ENCODE measurements at regions of chr5 and their contacts with region 1.

Region 1: DNA sequence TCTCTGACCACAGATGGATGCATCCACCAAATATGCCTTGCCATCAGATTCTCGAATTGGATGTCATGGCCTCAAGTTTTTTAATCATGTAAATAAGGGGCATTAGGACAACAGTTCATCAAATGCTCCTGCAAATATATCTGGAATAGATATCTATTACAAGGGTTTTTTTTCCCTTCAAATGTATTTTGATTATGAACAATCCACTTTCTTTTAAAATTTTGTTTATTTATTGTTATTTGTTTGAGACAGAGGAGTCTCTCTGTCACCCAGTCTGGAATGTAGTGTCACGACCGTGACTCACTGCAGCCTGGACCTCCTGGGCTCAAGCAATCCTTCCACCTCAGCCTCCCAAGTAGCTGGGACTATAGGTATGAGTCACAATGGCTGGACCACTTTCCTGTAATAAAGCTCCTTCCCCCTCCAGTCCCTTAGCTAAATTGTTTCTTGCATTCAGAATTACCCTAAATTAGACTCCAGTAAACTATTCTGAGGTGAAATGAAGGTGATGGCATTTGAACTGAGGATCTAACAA is 1412.1 kb downstream of the EFNA5 start:
- DNase-seq: peak in 1 of 2 experiments; percentile 5
- H3K4me3 ChIP-seq: no peak overlapping the region
- H3K27ac ChIP-seq: no peak overlapping the region
- H3K4me1 ChIP-seq: no peaks in the 10 kb centered on the region
- H3K27me3 ChIP-seq: no peaks in the 10 kb centered on the region
- CTCF ChIP-seq: no peak

Region 2: DNA sequence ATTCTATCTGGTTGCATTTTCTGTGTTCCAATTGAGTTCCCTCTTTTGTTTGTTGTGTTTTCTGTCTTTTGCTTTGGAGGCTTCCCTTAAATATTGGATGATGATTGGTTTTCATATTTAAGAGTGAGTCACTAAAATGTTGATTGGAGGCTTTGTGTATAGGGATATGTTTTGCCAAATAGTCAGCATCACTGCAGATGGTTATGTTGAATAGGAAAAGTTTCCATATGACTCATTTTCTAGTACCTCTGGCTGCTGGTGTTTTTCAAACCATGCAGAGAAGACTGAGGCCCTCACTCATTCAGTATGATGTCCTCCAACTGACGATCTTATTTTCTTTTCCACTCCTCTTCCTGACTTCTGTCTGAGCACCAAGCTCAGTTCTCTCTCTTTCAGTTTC is 122.1 kb after region 1 on chr5:
- CTCF ChIA-PET with region 1: no interaction called
- POLR2A ChIA-PET with region 1: interaction called, 13 read pairs
- intact Hi-C with region 1: no loop called
- DNase-seq: no peak
- H3K4me3 ChIP-seq: no peak overlapping the region
- H3K27ac ChIP-seq: no peak overlapping the region
- H3K4me1 ChIP-seq: no peaks in the 10 kb centered on the region
- H3K27me3 ChIP-seq: no peaks in the 10 kb centered on the region
- CTCF ChIP-seq: no peak

Measured in PC-9 (cell line).